ENCODE measurements at regions of chr1 and their contacts with region 1.

Region 1: DNA sequence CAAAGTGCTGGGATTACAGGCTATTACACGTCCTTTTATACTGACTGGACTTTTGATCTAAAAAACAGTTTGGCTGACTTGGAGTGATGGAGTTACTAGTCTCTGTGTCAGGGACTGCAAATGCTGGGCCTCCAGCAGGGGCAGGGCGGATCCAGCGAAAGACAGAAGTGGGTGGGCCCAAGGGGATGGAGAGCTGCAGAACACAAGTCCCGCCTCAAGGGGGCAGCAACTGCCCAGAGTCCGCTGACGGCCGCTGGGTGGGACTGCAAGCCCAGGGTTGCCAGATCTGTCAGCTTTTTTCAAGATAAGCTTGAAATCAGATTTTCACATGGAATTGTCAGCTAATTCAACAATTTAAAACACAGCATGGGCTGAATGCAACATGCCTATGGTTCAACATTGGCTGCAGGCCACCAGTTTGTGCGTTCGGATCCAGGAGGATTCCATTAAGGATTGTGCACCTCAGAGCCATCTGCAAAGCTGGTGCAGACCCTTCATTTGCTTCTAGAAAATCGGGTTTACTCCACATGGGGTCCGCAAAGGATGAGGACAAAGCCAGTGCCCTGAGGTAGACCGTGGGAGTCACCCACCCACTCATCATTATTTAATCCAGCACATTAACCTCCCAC is 10.7 kb downstream of the STMN1 start:
- DNase-seq: peak; percentile 92
- ATAC-seq: peak; percentile 76
- H3K4me3 ChIP-seq: no peak overlapping the region
- H3K27ac ChIP-seq: no peak overlapping the region
- H3K4me1 ChIP-seq: peaks cover 39% of the 10 kb centered on the region
- H3K27me3 ChIP-seq: no peaks in the 10 kb centered on the region
- CTCF ChIP-seq: peak; percentile 96

Region 2: GRCh38 chr1:25161981-25162380 is 733.5 kb before region 1 on chr1:
- CTCF ChIA-PET with region 1: no interaction called
- POLR2A ChIA-PET with region 1: no interaction called
- intact Hi-C with region 1: no loop called
- DNase-seq: no peak
- ATAC-seq: no peak
- H3K4me3 ChIP-seq: no peak overlapping the region
- H3K27ac ChIP-seq: no peak overlapping the region
- H3K4me1 ChIP-seq: peaks cover under 1% of the 10 kb centered on the region; the same call in 1 of the 2 replicates
- H3K27me3 ChIP-seq: peaks cover 31% of the 10 kb centered on the region
- CTCF ChIP-seq: no peak

Region 3: DNA sequence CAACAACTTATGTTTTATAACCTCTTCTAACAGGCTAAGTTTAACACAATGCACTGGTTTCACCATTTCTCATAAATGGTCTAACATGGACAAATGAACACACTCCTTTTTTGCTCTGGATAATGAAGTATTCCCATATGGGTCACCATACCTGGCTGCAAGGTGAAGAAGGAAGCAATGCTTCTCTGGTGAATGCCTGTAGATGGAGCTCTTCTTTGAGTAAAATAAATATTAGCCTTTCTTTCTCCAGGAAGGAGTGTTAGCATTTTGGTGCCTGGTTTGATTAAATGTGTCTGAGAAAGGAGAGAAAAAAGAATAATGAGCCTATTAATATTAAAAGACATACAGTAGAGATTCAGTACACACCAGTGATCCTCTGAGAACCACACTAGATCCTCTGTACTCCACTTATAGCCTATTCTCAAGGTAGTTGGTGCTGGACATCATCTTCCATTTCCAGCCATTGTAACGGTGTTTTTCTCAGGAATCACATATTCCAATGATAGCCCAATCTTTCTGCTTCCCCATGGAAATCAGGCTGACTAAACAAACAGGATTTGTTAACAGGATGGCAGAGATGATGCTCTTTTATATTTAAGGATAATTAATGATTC is 58.1 kb before region 1 on chr1:
- CTCF ChIA-PET with region 1: interaction called, 5 read pairs
- POLR2A ChIA-PET with region 1: no interaction called
- intact Hi-C with region 1: loop called (anchors 1 kb)
- DNase-seq: peak; percentile 52
- ATAC-seq: peak; percentile 76
- H3K4me3 ChIP-seq: no peak overlapping the region
- H3K27ac ChIP-seq: no peak overlapping the region
- H3K4me1 ChIP-seq: no peaks in the 10 kb centered on the region
- H3K27me3 ChIP-seq: no peaks in the 10 kb centered on the region
- CTCF ChIP-seq: peak; percentile 79

Region 4: GRCh38 chr1:26094677-26095383 is 199.4 kb after region 1 on chr1:
- CTCF ChIA-PET with region 1: no interaction called
- POLR2A ChIA-PET with region 1: no interaction called
- intact Hi-C with region 1: loop called (anchors 10 kb)
- DNase-seq: peak; percentile 19
- ATAC-seq: peak; percentile 21
- H3K4me3 ChIP-seq: no peak overlapping the region
- H3K27ac ChIP-seq: no peak overlapping the region
- H3K4me1 ChIP-seq: peaks cover 29% of the 10 kb centered on the region
- H3K27me3 ChIP-seq: no peaks in the 10 kb centered on the region
- CTCF ChIP-seq: no peak